H1 (cell line): ENCODE measurements at regions of chr14 and their contacts with region 1.

Region 1: GRCh38 chr14:67426983-67427606 is 15.1 kb upstream of the PLEK2 start:
- DNase-seq: peak; percentile 70 to 82
- H3K4me3 ChIP-seq: peak overlapping the region in 1 of 4 experiments; percentile 20; a peak in 1 of 8 replicates
- H3K27ac ChIP-seq: no peak overlapping the region
- H3K4me1 ChIP-seq: peaks cover 0 to 7% (median 2%) of the 10 kb centered on the region in 4 experiments; a peak in 3 of 7 replicates
- H3K27me3 ChIP-seq: no peaks in the 10 kb centered on the region
- CTCF ChIP-seq: peak; percentile 56 to 88 (median 87)
- EP300 ChIP-seq: no peak
- POLR2A ChIP-seq: no peak
- RAD21 ChIP-seq: peak; percentile 92 to 96

Region 2: GRCh38 chr14:67411820-67412421 is 15.2 kb before region 1 on chr14 and contains the start of gene PLEK2:
- CTCF ChIA-PET with region 1: interaction called, 67 read pairs
- POLR2A ChIA-PET with region 1: no interaction called
- DNase-seq: peak in 1 of 2 experiments; percentile 67
- H3K4me3 ChIP-seq: peak within 1 kb of the TSS; percentile 39 to 64 (median 40)
- H3K27ac ChIP-seq: no peak within 1 kb of the TSS
- H3K4me1 ChIP-seq: peaks cover 0 to 3% (median 0%) of the 10 kb centered on the region in 4 experiments; a peak in 3 of 7 replicates
- H3K27me3 ChIP-seq: peaks cover 0 to 20% (median 13%) of the 10 kb centered on the region in 4 experiments; a peak in 6 of 7 replicates
- CTCF ChIP-seq: no peak
- EP300 ChIP-seq: no peak
- POLR2A ChIP-seq: no peak
- RAD21 ChIP-seq: no peak
- total RNA-seq, gene PLEK2: 2.1 and 2.9 TPM in 2 replicates

Region 3: GRCh38 chr14:67467179-67468080 is 40.3 kb after region 1 on chr14:
- CTCF ChIA-PET with region 1: interaction called, 68 read pairs
- POLR2A ChIA-PET with region 1: interaction called, 4 read pairs
- DNase-seq: no peak
- H3K4me3 ChIP-seq: no peak overlapping the region
- H3K27ac ChIP-seq: no peak overlapping the region
- H3K4me1 ChIP-seq: peaks cover 0 to 2% (median 0%) of the 10 kb centered on the region in 4 experiments; a peak in 1 of 7 replicates
- H3K27me3 ChIP-seq: no peaks in the 10 kb centered on the region; a peak in 1 of 7 replicates
- CTCF ChIP-seq: peak in 2 of 3 experiments; percentile 28 to 52; a peak in 2 of 4 replicates
- EP300 ChIP-seq: no peak
- POLR2A ChIP-seq: no peak
- RAD21 ChIP-seq: no peak; a peak in 1 of 4 replicates

Region 4: GRCh38 chr14:67502881-67503699 is 76.0 kb after region 1 on chr14:
- CTCF ChIA-PET with region 1: interaction called, 19 read pairs
- POLR2A ChIA-PET with region 1: no interaction called
- DNase-seq: no peak
- H3K4me3 ChIP-seq: no peak overlapping the region
- H3K27ac ChIP-seq: no peak overlapping the region
- H3K4me1 ChIP-seq: no peaks in the 10 kb centered on the region
- H3K27me3 ChIP-seq: no peaks in the 10 kb centered on the region
- CTCF ChIP-seq: no peak
- EP300 ChIP-seq: no peak
- POLR2A ChIP-seq: no peak
- RAD21 ChIP-seq: no peak

Region 5: GRCh38 chr14:67532998-67533753 is 106.1 kb after region 1 on chr14 and contains the start of gene PLEKHH1:
- CTCF ChIA-PET with region 1: interaction called, 98 read pairs
- POLR2A ChIA-PET with region 1: no interaction called
- DNase-seq: peak; percentile 63 to 84
- H3K4me3 ChIP-seq: peak within 1 kb of the TSS; percentile 57 to 82 (median 64)
- H3K27ac ChIP-seq: peak within 1 kb of the TSS; percentile 31; the same call in 1 of the 2 replicates
- H3K4me1 ChIP-seq: peaks cover 0 to 6% (median 2%) of the 10 kb centered on the region in 4 experiments; a peak in 5 of 7 replicates
- H3K27me3 ChIP-seq: no peaks in the 10 kb centered on the region
- CTCF ChIP-seq: peak in 1 of 3 experiments; percentile 3; a peak in 1 of 4 replicates
- EP300 ChIP-seq: no peak
- POLR2A ChIP-seq: peak; percentile 55 to 68
- RAD21 ChIP-seq: no peak
- total RNA-seq, gene PLEKHH1: 27.2 and 33.3 TPM in 2 replicates

Region 6: GRCh38 chr14:67583711-67584644 is 156.9 kb after region 1 on chr14:
- CTCF ChIA-PET with region 1: interaction called, 446 read pairs
- POLR2A ChIA-PET with region 1: no interaction called
- DNase-seq: no peak
- H3K4me3 ChIP-seq: no peak overlapping the region
- H3K27ac ChIP-seq: no peak overlapping the region
- H3K4me1 ChIP-seq: no peaks in the 10 kb centered on the region
- H3K27me3 ChIP-seq: no peaks in the 10 kb centered on the region
- CTCF ChIP-seq: peak; percentile 54 to 83 (median 80)
- EP300 ChIP-seq: no peak
- POLR2A ChIP-seq: no peak
- RAD21 ChIP-seq: peak; percentile 89 to 90